G401 (cell line): ENCODE measurements at regions of chr19 and their contacts with region 1.

Region 1: DNA sequence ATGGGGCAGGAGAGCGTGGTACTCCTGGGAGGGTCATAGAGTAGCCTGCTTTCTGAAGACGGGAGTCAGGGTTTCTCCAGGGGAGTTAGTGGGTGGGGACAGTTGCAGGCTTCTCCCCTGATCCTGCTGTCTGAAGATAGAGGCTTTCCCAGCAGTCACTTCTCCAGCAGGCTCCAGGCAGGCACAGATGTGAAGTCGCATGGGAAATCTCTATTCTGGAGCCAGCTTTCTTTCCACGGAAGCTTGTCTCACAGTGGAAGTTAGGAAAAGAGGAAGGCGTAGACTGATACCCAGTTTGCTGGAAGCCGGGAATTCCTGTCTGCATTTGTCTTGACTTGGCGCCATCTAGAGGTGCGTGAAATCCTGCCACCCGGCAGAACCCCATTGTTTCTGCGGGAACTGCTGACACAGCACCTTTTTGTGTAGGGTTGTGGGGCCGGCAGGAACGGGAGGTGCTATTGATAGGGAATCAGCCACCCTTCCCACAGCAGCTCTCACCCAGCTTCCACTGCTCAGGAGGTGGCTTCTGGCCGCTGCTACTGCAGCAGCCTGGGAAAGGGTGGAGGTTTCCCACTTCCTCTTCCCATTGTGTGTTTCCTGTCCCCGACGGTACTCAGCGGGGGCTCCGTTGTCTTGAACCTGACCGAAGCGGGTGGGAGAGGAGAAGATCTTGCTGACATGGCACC is 28.5 kb upstream of the NPAS1 start:
- DNase-seq: peak; percentile 83

Region 2: GRCh38 chr19:46890423-46891170 is 100.5 kb before region 1 on chr19:
- in situ Hi-C with region 1: loop called (anchors 25 kb)
- DNase-seq: peak; percentile 49

Region 3: GRCh38 chr19:46954993-46955812 is 35.9 kb before region 1 on chr19:
- in situ Hi-C with region 1: no loop called
- DNase-seq: no peak